ENCODE measurements at regions of chr17 and their contacts with region 1.

Region 1: DNA sequence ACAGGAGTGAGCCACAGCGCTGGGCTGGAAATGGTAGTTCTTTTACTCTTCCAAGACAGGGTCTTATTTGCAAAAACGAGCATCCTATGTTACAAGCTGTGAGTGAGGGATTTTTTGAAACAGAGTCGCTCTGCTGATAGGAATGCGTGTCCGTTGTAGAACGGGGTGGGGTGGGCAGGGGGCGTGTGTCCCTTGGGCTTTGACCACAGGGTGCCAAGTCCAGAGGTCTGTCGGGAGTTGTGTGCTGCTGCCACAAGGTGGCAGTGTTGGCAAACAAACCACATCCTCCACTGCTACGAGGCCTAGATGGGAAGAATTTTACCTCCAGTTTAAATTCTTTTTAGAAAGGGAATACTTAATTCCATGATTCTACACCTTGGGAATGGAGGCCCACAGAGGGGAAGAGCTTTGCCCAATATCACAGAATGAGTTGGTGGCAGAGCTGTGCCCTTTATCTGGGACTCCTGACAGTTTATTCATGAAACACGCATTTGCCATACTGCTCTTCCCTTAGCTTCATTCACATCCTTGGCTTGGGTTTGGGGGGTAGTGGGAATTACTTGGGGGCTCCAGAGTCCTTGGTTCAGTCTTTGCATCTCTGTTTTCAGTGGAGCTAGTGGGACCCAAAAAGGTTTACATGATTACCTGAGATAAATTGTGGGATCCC is 30.6 kb upstream of the ETV4 start:
- DNase-seq: peak; percentile 80

Region 2: DNA sequence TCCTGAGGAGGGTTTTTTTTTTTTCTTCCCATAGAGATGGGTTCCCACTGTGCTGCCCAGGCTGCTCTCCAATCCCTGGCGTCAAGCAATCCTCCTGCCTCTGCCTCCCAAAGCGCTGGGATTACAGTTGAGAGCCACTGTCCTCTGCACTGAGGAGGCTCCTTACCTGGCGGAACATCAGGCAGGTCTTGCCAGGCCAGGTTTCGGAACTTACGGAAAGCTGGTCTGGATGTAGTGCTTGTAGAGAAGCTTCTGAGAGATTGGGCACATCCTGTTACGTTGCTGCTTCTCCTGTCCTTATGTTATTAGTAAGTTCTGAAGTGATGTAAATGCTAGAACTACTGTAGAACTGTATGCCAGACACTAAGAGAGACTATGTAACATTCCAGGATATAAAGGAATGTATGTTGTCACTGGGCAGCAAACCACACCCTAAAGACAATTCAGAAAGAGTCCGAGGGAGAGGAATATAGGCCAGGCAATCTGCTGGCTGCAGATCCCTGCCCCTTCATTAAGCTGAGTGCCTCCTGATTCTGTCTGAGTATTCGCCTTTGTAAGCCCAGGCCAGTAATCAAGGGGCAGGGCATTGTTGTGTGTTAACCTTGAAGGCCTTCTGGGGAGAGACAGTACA is 51.6 kb before region 1 on chr17:
- intact Hi-C with region 1: loop called (anchors 5 kb)
- DNase-seq: peak; percentile 1

Region 3: DNA sequence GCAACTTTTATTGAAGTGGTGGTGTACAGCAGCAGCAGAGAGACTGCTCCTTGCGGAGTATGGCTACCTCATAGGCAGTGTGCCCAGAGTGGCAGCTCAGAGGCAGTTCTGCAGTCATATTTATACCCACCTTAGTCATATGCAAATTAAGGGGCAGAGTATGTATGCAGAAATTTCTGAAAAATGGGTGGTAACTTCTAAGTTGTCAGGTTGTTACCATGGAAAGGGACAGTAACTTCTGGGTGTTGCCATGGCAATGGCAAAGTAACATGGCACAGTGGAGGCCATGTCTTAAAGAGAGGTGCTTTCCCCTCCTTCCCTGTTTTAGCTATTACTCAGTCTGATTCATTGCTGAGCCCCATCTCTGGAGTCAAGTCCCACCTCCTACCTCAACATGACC is 31.6 kb after region 1 on chr17:
- intact Hi-C with region 1: no loop called
- DNase-seq: no peak

Region 4: DNA sequence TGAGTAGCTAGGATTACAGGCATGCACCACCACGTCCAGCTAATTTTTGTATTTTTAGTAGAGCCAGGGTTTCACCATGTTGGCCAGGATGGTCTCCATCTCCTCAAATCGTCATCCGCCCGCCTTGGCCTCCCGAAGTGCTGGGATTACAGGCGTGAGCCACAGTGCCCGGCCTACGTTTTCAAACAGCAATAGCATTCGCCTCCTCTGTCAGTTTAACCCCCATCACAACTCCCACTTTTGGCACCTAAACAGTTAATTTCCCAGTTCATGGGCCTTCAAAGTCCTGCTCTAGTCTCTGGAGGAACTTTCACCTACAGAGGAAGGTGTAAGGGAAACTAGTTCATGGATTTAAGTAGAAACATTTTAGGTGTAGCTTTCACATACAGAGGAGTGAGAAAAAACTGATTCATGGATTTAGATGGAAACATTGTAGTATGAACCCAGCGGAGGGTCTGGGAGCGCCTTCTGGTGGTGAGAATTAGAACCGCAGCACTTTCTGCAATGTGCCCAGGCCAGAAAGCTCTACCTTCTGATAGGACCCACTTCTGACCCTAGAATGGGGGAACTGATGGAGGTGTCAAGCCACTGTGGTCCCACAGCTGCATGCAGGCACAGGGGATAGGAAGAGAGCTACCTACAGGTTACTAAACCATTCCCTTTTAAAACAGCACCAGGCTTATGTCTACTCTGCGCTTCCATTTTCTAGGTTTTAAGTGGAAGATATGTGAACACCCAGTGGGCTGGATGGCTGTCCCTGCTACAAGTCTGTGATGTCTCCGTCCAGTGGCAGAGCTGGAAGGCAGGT is 97.0 kb after region 1 on chr17:
- intact Hi-C with region 1: loop called (anchors 1 kb)
- DNase-seq: peak; percentile 88

Region 5: DNA sequence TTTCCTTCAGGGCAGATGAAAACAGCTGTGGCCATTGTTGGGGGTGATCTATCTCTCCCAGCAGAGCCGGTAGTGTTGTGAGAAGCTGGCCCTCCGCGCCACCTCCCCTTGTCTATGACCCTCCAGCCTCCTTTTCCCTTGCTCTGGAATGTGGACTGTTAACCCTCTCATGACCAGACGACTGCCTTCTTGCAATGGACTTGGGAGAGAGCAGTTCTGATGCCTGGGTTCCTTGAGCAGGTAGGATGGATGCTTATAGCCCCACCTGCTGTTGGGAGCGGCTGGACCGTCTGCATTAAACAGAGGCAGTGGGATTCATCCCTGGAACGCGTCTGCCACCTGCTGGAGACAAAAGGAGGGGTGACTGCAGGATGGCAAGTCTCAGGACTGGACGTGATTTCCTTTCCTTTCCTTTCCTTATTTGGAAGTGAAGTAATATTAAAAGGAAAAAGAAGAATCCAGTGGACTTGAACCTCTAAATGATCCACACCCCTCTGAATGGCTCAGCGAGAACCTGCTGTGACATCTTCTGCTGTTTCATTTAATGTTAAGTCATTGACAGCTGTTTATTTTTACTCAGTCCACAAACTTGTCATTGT is 183.7 kb after region 1 on chr17:
- intact Hi-C with region 1: loop called (anchors 5 kb)
- DNase-seq: peak; percentile 95

Region 6: DNA sequence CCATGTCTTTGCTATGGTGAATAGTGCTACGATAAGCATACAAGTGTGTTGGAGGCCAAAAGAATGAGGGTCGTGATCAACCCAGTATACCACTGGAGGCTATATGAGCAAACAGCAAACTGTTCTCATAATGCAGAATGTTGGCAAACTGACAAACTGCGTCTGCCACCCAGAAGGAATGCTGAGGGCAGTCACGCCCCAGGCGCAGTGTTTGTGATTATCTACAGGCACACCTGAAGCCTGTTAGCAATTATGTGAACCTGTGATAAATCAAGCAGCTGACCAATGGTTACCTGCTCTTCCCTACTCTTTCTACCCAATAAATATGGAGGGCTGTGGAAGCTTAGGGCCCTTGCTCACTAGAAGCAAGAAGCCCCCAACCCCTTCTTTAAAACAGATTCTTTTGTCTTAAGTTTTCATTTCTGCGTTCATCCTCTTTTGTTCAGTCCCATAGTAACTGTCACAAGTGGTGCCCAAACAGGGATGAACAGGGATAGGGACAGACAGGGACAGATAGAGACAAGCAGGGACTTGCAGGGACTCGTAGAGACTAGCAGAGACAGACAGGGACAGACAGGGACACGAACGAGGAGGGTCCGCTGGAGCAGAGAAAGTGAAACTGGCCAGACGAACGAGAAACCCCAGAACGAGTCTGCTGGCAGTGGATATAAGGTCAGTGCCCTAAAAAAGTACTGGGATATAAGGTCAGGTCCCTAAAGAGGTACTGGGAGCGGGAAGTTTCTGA is 295.4 kb after region 1 on chr17:
- intact Hi-C with region 1: no loop called
- DNase-seq: no peak